H1 (cell line): ENCODE measurements at regions of chr12 and their contacts with region 1.

Region 1: DNA sequence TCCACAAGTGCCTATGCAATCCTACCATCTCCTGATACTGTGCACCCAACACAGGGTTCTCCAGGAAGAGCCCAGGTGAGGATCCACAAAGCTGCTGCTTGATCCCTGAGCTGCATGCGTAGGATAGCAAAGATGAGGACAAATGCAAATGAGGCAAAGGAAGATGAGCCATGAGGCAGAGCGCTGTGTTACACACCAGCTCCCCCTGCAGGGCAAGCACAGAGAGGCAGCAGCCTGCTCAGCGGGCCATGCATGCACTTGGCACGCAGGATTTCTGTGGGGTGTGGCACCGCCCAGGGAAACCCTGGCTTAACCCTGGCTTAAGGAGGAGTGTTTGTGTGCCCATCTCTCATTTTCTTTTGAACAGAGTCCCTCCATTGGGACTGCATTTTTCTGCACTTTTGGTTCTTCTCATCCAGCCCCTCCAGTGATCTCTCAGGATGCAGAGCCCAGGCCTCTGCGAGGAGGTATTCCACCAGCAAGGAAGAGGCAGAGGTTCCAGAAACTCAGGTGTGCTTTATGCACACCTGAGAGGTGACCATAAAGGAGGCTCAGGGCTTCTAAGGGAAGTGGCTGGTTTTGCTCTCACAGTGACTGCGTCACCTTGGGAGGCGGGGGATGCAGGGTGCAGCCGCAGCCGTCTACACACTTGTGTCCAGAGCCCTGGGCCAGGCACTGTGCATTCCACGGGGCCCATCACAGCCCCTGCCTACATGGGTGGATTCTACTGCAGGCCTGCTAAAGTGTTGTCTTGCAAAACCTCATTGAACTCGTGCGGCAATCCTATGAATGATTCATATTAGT is 973.3 kb upstream of the TMEM132C start:
- DNase-seq: peak; percentile 44 to 87
- H3K4me3 ChIP-seq: no peak overlapping the region
- H3K27ac ChIP-seq: no peak overlapping the region
- H3K4me1 ChIP-seq: no peaks in the 10 kb centered on the region
- H3K27me3 ChIP-seq: no peaks in the 10 kb centered on the region
- CTCF ChIP-seq: peak; percentile 87 to 99 (median 99)
- EP300 ChIP-seq: no peak
- POLR2A ChIP-seq: no peak
- RAD21 ChIP-seq: peak; percentile 92 to 93

Region 2: GRCh38 chr12:127270193-127270592 is 23.5 kb before region 1 on chr12:
- CTCF ChIA-PET with region 1: interaction called, 11 read pairs
- POLR2A ChIA-PET with region 1: no interaction called
- DNase-seq: no peak
- H3K4me3 ChIP-seq: no peak overlapping the region
- H3K27ac ChIP-seq: no peak overlapping the region
- H3K4me1 ChIP-seq: no peaks in the 10 kb centered on the region
- H3K27me3 ChIP-seq: no peaks in the 10 kb centered on the region
- CTCF ChIP-seq: no peak
- EP300 ChIP-seq: no peak
- POLR2A ChIP-seq: no peak
- RAD21 ChIP-seq: no peak

Region 3: GRCh38 chr12:127304751-127305725 is 11.3 kb after region 1 on chr12:
- CTCF ChIA-PET with region 1: interaction called, 19 read pairs
- POLR2A ChIA-PET with region 1: no interaction called
- DNase-seq: no peak
- H3K4me3 ChIP-seq: no peak overlapping the region
- H3K27ac ChIP-seq: no peak overlapping the region
- H3K4me1 ChIP-seq: no peaks in the 10 kb centered on the region
- H3K27me3 ChIP-seq: no peaks in the 10 kb centered on the region
- CTCF ChIP-seq: no peak
- EP300 ChIP-seq: no peak
- POLR2A ChIP-seq: no peak
- RAD21 ChIP-seq: no peak

Region 4: GRCh38 chr12:127696963-127697362 is 403.3 kb after region 1 on chr12:
- CTCF ChIA-PET with region 1: no interaction called
- POLR2A ChIA-PET with region 1: no interaction called
- DNase-seq: no peak
- H3K4me3 ChIP-seq: no peak overlapping the region
- H3K27ac ChIP-seq: no peak overlapping the region
- H3K4me1 ChIP-seq: no peaks in the 10 kb centered on the region; a peak in 1 of 7 replicates
- H3K27me3 ChIP-seq: no peaks in the 10 kb centered on the region
- CTCF ChIP-seq: no peak
- EP300 ChIP-seq: no peak
- POLR2A ChIP-seq: no peak
- RAD21 ChIP-seq: no peak